Stomach (tissue), 19 donors: ENCODE measurements at regions of chr3 and their contacts with region 1.

Region 1: GRCh38 chr3:146189519-146190173 is 28.7 kb upstream of the PLOD2 start:
- DNase-seq: peak in 1 of 2 donors; percentile 78
- H3K4me3 ChIP-seq: no peak overlapping the region
- H3K27ac ChIP-seq: no peak overlapping the region
- H3K4me1 ChIP-seq: peaks cover 0 to 16% (median 3%) of the 10 kb centered on the region in 4 donors
- H3K27me3 ChIP-seq: no peaks in the 10 kb centered on the region
- CTCF ChIP-seq: peak in 5 of 7 experiments; percentile 17 to 75 (median 69)
- EP300 ChIP-seq: no peak
- POLR2A ChIP-seq: no peak

Region 2: GRCh38 chr3:146065573-146066006 is 124.1 kb before region 1 on chr3:
- intact Hi-C with region 1: loop called (anchors 5 kb)
- DNase-seq: peak in 1 of 2 donors; percentile 84
- H3K4me3 ChIP-seq: no peak overlapping the region
- H3K27ac ChIP-seq: no peak overlapping the region
- H3K4me1 ChIP-seq: peaks cover 0 to 12% (median 6%) of the 10 kb centered on the region in 4 donors
- H3K27me3 ChIP-seq: no peaks in the 10 kb centered on the region
- CTCF ChIP-seq: peak in 4 of 7 experiments; percentile 45 to 74 (median 60)
- EP300 ChIP-seq: no peak
- POLR2A ChIP-seq: no peak

Region 3: DNA sequence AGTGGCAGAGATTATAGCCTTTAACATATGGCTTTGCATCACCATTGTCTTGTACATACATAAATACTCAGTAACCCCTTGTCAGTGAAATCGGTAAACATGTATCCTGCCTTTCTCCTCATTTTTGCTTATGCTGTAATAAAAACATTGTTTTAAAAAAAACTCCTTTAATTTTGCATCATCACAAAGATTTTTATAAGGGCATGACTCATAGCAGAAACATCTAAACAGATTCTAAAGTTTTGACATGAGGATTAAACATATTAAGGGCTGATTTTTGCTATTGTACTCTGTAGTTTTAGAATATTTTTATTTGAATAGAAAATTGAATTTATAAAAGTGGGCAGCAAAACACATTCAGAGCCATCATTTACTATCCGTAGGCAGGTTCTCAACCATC is 940.8 kb after region 1 on chr3:
- intact Hi-C with region 1: no loop called
- DNase-seq: no peak
- H3K4me3 ChIP-seq: no peak overlapping the region
- H3K27ac ChIP-seq: no peak overlapping the region
- H3K4me1 ChIP-seq: no peaks in the 10 kb centered on the region
- H3K27me3 ChIP-seq: no peaks in the 10 kb centered on the region
- CTCF ChIP-seq: no peak
- EP300 ChIP-seq: no peak
- POLR2A ChIP-seq: no peak